ENCODE measurements at regions of chr9 and their contacts with region 1.

Region 1: DNA sequence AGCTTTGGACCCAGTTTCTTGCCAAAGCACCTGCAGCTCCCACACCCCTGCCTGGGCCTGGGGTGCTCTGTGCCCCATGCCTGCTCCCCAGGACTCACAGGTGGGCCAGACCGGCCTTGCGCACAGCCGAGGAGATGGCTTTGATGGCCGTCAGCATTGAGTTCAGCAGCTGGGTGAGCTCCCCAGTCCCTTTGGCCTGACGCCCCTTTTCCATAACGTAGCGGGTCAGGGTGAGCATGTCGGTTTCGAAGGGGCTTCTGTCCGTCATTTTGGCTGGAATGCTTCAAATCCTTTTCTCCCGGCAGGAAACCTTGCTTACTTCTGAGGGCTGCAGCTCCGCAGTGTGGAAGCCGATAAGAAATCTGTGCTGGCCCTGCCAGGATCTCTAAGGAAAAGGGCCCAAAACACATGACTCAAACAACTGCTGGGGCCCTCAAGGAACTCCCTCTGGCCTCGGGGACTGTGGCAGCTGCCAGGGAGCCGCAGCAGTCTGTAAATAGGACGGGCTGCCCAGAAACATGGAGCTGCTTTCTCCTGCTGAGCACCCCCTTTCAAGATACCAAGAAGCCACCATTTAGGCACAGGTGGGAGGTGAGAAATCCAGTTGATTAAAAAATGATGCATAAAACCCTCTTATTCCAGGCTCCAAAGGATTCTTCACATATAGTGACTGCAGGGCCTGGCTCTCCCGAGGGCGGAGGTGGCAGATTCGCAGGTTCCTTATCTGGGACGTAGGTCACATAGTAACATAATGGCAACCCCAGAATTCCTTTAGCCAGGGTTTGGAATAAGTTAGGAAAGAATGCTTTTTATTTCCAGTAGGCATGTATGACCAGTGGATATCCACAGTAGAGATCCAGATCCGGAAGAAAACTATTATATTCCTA is at the start of gene FBP2:
- DNase-seq: no peak
- H3K4me3 ChIP-seq: no peak within 1 kb of the TSS
- H3K27ac ChIP-seq: no peak within 1 kb of the TSS
- H3K27me3 ChIP-seq: peaks cover 8% of the 10 kb centered on the region
- CTCF ChIP-seq: no peak
- polyA plus RNA-seq, gene FBP2: not detected in 2 replicates

Region 2: DNA sequence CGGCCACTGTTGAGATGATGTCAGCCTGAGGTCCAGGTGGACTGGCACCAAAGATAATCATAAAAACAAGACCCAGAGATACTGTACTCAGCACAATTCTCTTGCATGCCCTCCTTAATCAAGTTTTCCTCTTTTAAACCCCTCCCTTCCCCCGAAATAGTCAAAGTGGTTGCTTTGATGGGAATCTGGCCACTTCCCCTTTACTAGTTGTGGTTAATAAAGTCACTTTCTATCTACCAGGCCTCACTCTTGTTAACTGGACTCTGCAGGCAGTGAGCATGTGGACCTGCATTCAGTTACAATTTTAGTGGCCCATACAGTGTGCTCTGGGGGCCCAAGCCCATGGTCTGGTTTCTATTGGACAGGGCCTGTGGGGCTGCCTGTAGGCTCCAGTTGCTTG is 17.6 kb before region 1 on chr9:
- CTCF ChIA-PET with region 1: no interaction called
- POLR2A ChIA-PET with region 1: no interaction called
- DNase-seq: no peak
- H3K4me3 ChIP-seq: no peak overlapping the region
- H3K27ac ChIP-seq: no peak overlapping the region
- H3K27me3 ChIP-seq: no peaks in the 10 kb centered on the region
- CTCF ChIP-seq: no peak

Region 3: GRCh38 chr9:94697972-94698581 is 104.4 kb after region 1 on chr9:
- CTCF ChIA-PET with region 1: no interaction called
- POLR2A ChIA-PET with region 1: interaction called, 14 read pairs
- DNase-seq: no peak
- H3K4me3 ChIP-seq: no peak overlapping the region
- H3K27ac ChIP-seq: no peak overlapping the region
- H3K27me3 ChIP-seq: no peaks in the 10 kb centered on the region
- CTCF ChIP-seq: no peak